Natural killer cell (primary cell): ENCODE measurements at regions of chr18 and their contacts with region 1.

Region 1: DNA sequence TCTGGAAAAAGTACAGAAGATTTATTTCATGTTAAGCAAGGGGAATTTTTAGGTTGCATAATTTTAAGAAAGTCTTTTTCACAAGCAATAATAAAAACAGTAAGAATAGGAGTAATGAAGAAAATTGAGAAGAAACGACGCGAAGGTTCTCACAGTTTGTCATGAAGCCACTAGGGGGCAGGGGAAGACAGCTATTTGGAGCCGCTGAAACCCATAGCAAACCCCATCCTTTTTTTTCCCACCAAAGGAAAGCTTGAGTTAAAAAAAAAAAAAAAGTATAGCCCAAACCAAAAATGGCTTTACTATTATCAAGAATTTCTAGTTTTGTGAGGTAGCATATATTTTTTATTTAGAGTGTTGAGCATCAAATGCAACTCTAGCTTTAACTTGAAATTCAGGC is 300.9 kb downstream of the PHLPP1 start:
- DNase-seq: peak in 1 of 2 donors; percentile 83
- ATAC-seq: peak; percentile 64 to 88 (median 82)
- H3K4me3 ChIP-seq: no peak overlapping the region
- H3K4me3 Mint-ChIP-seq: no peak overlapping the region
- H3K27ac ChIP-seq: no peak overlapping the region
- H3K27ac Mint-ChIP-seq: no peak overlapping the region
- H3K4me1 ChIP-seq: no peaks in the 10 kb centered on the region
- H3K4me1 Mint-ChIP-seq: no peaks in the 10 kb centered on the region
- H3K27me3 ChIP-seq: no peaks in the 10 kb centered on the region
- H3K27me3 Mint-ChIP-seq: peaks cover 16 to 33% of the 10 kb centered on the region in 2 donors
- CTCF ChIP-seq: peak; percentile 88

Region 2: DNA sequence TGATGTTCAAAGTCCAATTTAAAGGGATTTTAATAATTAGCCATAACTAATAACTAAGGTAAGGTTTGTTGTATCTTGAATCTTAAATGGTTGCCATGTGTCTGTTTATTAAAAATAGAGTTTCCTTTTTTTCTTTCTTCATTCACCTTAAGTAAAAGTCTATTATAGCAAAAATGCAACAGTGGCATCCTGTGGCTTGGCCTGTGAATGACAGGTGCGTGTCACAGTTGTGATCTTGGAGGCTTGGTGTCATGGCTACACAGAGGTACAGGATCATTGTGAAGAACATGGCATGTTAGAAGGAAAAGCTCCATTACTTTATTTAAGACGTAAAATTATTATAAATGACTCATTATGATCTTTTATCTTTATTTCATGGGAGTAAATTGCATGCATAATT is 57.2 kb after region 1 on chr18:
- intact Hi-C with region 1: loop called (anchors 1 kb)
- DNase-seq: peak in 1 of 2 donors; percentile 60
- ATAC-seq: peak; percentile 69 to 75 (median 70)
- H3K4me3 ChIP-seq: no peak overlapping the region
- H3K4me3 Mint-ChIP-seq: no peak overlapping the region
- H3K27ac ChIP-seq: no peak overlapping the region
- H3K27ac Mint-ChIP-seq: no peak overlapping the region
- H3K4me1 ChIP-seq: peaks cover 5% of the 10 kb centered on the region
- H3K4me1 Mint-ChIP-seq: peaks cover 13 to 19% of the 10 kb centered on the region in 2 donors
- H3K27me3 ChIP-seq: no peaks in the 10 kb centered on the region
- H3K27me3 Mint-ChIP-seq: peaks cover 2 to 7% of the 10 kb centered on the region in 2 donors
- CTCF ChIP-seq: peak; percentile 48

Region 3: GRCh38 chr18:63131106-63131958 is 115.1 kb after region 1 on chr18:
- intact Hi-C with region 1: loop called (anchors 1 kb)
- DNase-seq: peak; percentile 33 to 81
- ATAC-seq: peak; percentile 62 to 90 (median 71)
- H3K4me3 ChIP-seq: no peak overlapping the region
- H3K4me3 Mint-ChIP-seq: no peak overlapping the region
- H3K27ac ChIP-seq: peak overlapping the region; percentile 4
- H3K27ac Mint-ChIP-seq: peak overlapping the region in 1 of 2 donors; percentile 60
- H3K4me1 ChIP-seq: peaks cover 6% of the 10 kb centered on the region
- H3K4me1 Mint-ChIP-seq: peaks cover 18 to 32% of the 10 kb centered on the region in 2 donors
- H3K27me3 ChIP-seq: no peaks in the 10 kb centered on the region
- H3K27me3 Mint-ChIP-seq: no peaks in the 10 kb centered on the region
- CTCF ChIP-seq: peak; percentile 79

Region 4: GRCh38 chr18:63339920-63340484 is 323.7 kb after region 1 on chr18:
- intact Hi-C with region 1: loop called (anchors 1 kb)
- DNase-seq: peak in 1 of 2 donors; percentile 78
- ATAC-seq: peak; percentile 61 to 72 (median 69)
- H3K4me3 ChIP-seq: no peak overlapping the region
- H3K4me3 Mint-ChIP-seq: no peak overlapping the region
- H3K27ac ChIP-seq: no peak overlapping the region
- H3K27ac Mint-ChIP-seq: no peak overlapping the region
- H3K4me1 ChIP-seq: no peaks in the 10 kb centered on the region
- H3K4me1 Mint-ChIP-seq: peaks cover 0 to 1% of the 10 kb centered on the region in 2 donors
- H3K27me3 ChIP-seq: no peaks in the 10 kb centered on the region
- H3K27me3 Mint-ChIP-seq: no peaks in the 10 kb centered on the region
- CTCF ChIP-seq: peak; percentile 64

Region 5: GRCh38 chr18:63439334-63439733 is 423.1 kb after region 1 on chr18:
- intact Hi-C with region 1: loop called (anchors 1 kb)
- DNase-seq: peak in 1 of 2 donors; percentile 80
- ATAC-seq: peak; percentile 69 to 82 (median 78)
- H3K4me3 ChIP-seq: no peak overlapping the region
- H3K4me3 Mint-ChIP-seq: no peak overlapping the region
- H3K27ac ChIP-seq: no peak overlapping the region
- H3K27ac Mint-ChIP-seq: no peak overlapping the region
- H3K4me1 ChIP-seq: no peaks in the 10 kb centered on the region
- H3K4me1 Mint-ChIP-seq: no peaks in the 10 kb centered on the region
- H3K27me3 ChIP-seq: no peaks in the 10 kb centered on the region
- H3K27me3 Mint-ChIP-seq: peaks cover 12 to 13% of the 10 kb centered on the region in 2 donors
- CTCF ChIP-seq: peak; percentile 95